GM10248 (cell line): ENCODE measurements at regions of chr2 and their contacts with region 1.

Region 1: GRCh38 chr2:222561817-222562645 is 93.9 kb downstream of the FARSB start:
- DNase-seq: peak; percentile 73
- CTCF ChIP-seq: peak; percentile 61

Region 2: DNA sequence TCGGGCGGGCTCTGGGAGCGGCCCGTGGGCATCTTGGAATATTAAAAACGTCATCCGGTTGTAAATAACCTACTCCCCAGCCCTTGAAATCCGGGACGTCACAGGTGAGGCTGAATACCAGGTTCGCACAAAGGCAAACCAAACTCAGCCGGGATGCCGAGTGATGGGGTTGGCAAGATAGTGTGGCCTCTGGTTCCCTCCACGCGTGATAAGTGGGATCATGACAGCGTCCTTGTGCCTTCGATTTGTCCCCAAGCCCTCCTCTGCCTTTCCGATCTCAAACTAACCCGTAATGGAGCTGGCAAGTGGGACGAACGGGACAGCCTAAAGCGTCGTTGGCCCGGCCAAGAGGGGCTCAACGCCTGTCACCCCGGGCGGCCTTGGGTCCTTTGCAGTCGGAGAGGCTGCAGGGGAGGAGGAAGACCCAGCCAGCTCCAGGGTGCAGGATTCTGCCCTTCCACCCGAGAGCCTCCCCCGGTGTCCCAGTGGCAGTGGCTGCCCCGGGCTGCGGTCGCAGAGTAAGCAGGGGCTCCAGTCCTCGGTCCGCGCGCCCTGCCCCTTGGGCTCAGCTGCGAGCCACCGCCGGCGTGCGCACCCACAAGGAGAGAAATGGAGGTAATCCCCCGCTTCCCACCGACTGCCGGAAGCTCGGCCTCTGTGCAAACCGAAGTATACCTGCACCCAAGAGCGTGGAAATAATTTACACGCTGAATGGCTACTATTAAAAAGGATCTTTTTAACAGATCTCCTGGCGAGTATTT is 249.9 kb before region 1 on chr2:
- CTCF ChIA-PET with region 1: interaction called, 155 read pairs
- POLR2A ChIA-PET with region 1: no interaction called
- DNase-seq: no peak
- CTCF ChIP-seq: no peak

Region 3: DNA sequence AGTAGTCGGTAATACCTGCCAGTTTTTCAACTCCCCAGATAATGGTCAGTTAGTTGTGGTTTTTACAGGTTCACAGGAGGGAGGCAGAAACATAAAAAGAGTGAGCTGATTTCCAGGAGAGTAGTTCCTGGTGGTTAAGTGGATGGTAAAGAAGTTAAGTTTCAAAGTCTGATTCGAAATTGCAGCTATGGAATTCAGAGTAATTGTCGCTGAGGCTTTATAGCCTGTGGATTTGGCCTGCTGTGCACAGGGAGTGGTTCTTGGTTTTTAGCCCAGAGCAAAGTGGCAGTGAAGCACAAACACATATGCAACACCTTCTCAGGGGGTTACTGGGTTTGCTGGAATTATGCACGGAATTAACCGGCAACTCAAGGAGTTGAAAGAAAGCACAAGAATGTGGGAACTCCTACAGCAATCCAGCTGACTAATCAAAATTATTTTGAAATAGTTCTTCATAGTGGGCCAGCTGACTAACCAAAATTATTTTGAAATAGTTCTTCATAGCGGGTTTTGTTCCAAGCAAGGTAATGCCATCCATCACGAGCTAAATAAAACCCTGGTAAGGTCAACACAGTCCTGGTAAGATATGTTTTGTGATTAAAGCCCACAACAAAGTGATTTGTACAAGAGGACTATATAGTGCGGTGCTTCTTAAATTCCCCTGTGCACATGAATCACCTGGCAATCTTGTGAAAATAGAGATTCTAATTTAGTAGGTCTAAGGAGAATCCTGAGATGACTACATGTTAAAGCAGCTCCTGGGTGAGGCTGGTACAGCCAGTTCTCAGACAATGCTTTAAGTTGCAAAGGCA is 43.3 kb before region 1 on chr2:
- CTCF ChIA-PET with region 1: interaction called, 14 read pairs
- POLR2A ChIA-PET with region 1: no interaction called
- DNase-seq: no peak
- CTCF ChIP-seq: no peak

Region 4: GRCh38 chr2:222548992-222549391 is 13.0 kb before region 1 on chr2:
- CTCF ChIA-PET with region 1: interaction called, 11 read pairs
- POLR2A ChIA-PET with region 1: no interaction called
- DNase-seq: no peak
- CTCF ChIP-seq: no peak

Region 5: GRCh38 chr2:222572751-222573174 is 10.7 kb after region 1 on chr2:
- CTCF ChIA-PET with region 1: interaction called, 26 read pairs
- POLR2A ChIA-PET with region 1: no interaction called
- DNase-seq: no peak
- CTCF ChIP-seq: no peak

Region 6: GRCh38 chr2:222582928-222583327 is 20.9 kb after region 1 on chr2:
- CTCF ChIA-PET with region 1: interaction called, 12 read pairs
- POLR2A ChIA-PET with region 1: no interaction called
- DNase-seq: no peak
- CTCF ChIP-seq: no peak

Region 7: GRCh38 chr2:222621893-222622292 is 59.9 kb after region 1 on chr2:
- CTCF ChIA-PET with region 1: no interaction called
- POLR2A ChIA-PET with region 1: no interaction called
- DNase-seq: no peak
- CTCF ChIP-seq: no peak

Region 8: GRCh38 chr2:222993920-222994650 is 432.1 kb after region 1 on chr2:
- CTCF ChIA-PET with region 1: no interaction called
- POLR2A ChIA-PET with region 1: no interaction called
- DNase-seq: no peak
- CTCF ChIP-seq: no peak